HepG2 (cell line): ENCODE measurements at regions of chr22 and their contacts with region 1.

Region 1: DNA sequence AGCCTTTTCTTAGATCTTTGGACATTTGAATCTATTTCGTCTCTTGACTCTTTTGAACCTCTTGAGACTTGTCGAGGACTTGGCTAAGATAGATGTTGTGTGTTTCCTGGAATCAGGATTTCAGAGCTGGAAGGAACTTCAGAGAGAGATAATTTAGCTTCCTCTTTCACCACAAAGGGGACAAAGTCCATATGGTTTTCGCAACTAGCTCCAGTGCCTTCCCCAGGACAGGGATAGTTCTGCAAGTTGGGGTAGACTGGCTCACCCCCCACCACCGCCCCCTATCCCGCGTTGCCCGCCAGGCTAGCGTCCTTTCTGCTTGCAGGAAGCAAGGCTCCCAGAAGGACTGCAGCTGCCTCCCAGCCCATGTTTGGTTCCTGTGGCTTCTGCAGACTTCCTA is 75.7 kb upstream of the MYO18B start:
- DNase-seq: peak; percentile 95
- ATAC-seq: peak; percentile 92
- H3K4me3 ChIP-seq: peak overlapping the region in 1 of 3 experiments; percentile 29; a peak in 2 of 6 replicates
- H3K27ac ChIP-seq: peak overlapping the region; percentile 58
- H3K4me1 ChIP-seq: peaks cover 80% of the 10 kb centered on the region
- H3K27me3 ChIP-seq: no peaks in the 10 kb centered on the region
- CTCF ChIP-seq: peak; percentile 52
- EP300 ChIP-seq: peak; percentile 79 to 91; a peak in 3 of 4 replicates
- POLR2A ChIP-seq: no peak
- RAD21 ChIP-seq: peak; percentile 35; the same call in 1 of the 2 replicates

Region 2: GRCh38 chr22:25564320-25564978 is 101.9 kb before region 1 on chr22 and contains the start of gene GRK3:
- CTCF ChIA-PET with region 1: no interaction called
- POLR2A ChIA-PET with region 1: interaction called, 4 read pairs
- in situ Hi-C with region 1: loop called (anchors 10 kb)
- intact Hi-C with region 1: no loop called
- DNase-seq: no peak
- ATAC-seq: peak; percentile 78
- H3K4me3 ChIP-seq: peak within 1 kb of the TSS; percentile 84 to 92 (median 91)
- H3K27ac ChIP-seq: peak within 1 kb of the TSS; percentile 66
- H3K4me1 ChIP-seq: peaks cover 57% of the 10 kb centered on the region
- H3K27me3 ChIP-seq: no peaks in the 10 kb centered on the region; a peak in 1 of 5 replicates
- CTCF ChIP-seq: no peak
- EP300 ChIP-seq: no peak
- POLR2A ChIP-seq: peak in 1 of 2 experiments; percentile 71; a peak in 2 of 4 replicates
- RAD21 ChIP-seq: no peak
- total RNA-seq, gene GRK3: 16.7 and 23.6 TPM in 2 replicates